ENCODE measurements at regions of chr14 and their contacts with region 1.

Region 1: GRCh38 chr14:61837336-61838229 is 75.4 kb downstream of the SNAPC1 start:
- DNase-seq: peak; percentile 46
- ATAC-seq: peak; percentile 99
- H3K4me3 ChIP-seq: no peak overlapping the region
- H3K27ac ChIP-seq: no peak overlapping the region
- H3K4me1 ChIP-seq: no peaks in the 10 kb centered on the region; the same call in 1 of the 2 replicates
- H3K27me3 ChIP-seq: no peaks in the 10 kb centered on the region
- CTCF ChIP-seq: peak; percentile 93 to 96 (median 96)
- EP300 ChIP-seq: no peak
- POLR2A ChIP-seq: no peak
- RAD21 ChIP-seq: peak; percentile 100

Region 2: DNA sequence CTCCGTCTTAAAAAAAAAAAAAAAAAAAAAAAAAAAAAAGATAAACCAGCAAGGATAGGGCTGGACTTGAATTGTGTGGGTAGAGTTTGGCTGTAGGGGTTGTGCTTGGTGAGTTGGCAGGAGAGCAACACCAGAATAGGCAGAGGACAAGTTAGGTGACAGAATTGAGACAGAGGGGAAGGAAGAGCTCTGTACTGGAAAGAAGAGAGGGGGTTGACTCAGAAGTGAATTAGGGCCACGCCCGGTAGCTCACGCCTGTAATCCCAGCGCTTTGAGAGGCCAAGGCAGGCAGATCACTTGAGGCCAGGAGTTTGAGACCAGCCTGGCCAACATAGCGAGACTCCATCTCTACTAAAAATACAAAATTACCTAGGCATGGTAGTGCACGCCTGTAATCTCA is 550.4 kb before region 1 on chr14:
- CTCF ChIA-PET with region 1: interaction called, 21 read pairs
- POLR2A ChIA-PET with region 1: interaction called, 5 read pairs
- RAD21 ChIA-PET with region 1: interaction called, 5 read pairs
- SMC1A ChIA-PET with region 1: interaction called, 9 read pairs
- in situ Hi-C with region 1: no loop called
- intact Hi-C with region 1: no loop called
- DNase-seq: no peak
- ATAC-seq: no peak
- H3K4me3 ChIP-seq: no peak overlapping the region
- H3K27ac ChIP-seq: no peak overlapping the region
- H3K4me1 ChIP-seq: no peaks in the 10 kb centered on the region
- H3K27me3 ChIP-seq: no peaks in the 10 kb centered on the region; a peak in 1 of 4 replicates
- CTCF ChIP-seq: no peak
- EP300 ChIP-seq: no peak
- POLR2A ChIP-seq: no peak
- RAD21 ChIP-seq: no peak

Region 3: DNA sequence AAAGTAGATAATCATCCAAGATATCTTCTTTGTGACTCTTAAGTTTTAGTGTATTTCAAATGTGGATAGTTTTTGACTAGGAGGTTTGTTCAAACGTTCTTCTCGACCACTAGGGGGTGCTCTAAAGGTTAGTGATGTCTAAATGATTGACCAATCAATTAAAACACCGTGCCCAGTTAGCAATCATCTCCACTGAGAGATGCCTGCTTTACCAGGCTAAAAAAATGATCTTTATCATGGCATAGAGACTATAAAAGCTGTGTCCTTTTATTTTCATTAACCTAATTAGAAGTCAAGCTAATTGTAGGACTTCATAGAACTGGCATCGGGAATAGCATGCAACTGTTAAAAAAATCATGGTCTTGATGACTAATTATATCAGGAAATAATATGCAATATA is 362.3 kb before region 1 on chr14:
- CTCF ChIA-PET with region 1: interaction called, 72 read pairs
- POLR2A ChIA-PET with region 1: no interaction called
- RAD21 ChIA-PET with region 1: interaction called, 57 read pairs
- SMC1A ChIA-PET with region 1: interaction called, 56 read pairs
- in situ Hi-C with region 1: no loop called
- intact Hi-C with region 1: loop called (anchors 5 kb)
- DNase-seq: no peak
- ATAC-seq: peak; percentile 48
- H3K4me3 ChIP-seq: no peak overlapping the region
- H3K27ac ChIP-seq: no peak overlapping the region
- H3K4me1 ChIP-seq: peaks cover 67% of the 10 kb centered on the region
- H3K27me3 ChIP-seq: no peaks in the 10 kb centered on the region
- CTCF ChIP-seq: peak; percentile 54 to 59 (median 57); a peak in 5 of 6 replicates
- EP300 ChIP-seq: no peak
- POLR2A ChIP-seq: no peak
- RAD21 ChIP-seq: peak; percentile 55

Region 4: GRCh38 chr14:61553725-61554641 is 283.6 kb before region 1 on chr14:
- CTCF ChIA-PET with region 1: interaction called, 7 read pairs
- POLR2A ChIA-PET with region 1: no interaction called
- RAD21 ChIA-PET with region 1: interaction called, 10 read pairs
- SMC1A ChIA-PET with region 1: interaction called, 16 read pairs
- in situ Hi-C with region 1: no loop called
- intact Hi-C with region 1: no loop called
- DNase-seq: no peak
- ATAC-seq: no peak
- H3K4me3 ChIP-seq: no peak overlapping the region
- H3K27ac ChIP-seq: no peak overlapping the region
- H3K4me1 ChIP-seq: peaks cover 15% of the 10 kb centered on the region
- H3K27me3 ChIP-seq: no peaks in the 10 kb centered on the region
- CTCF ChIP-seq: no peak
- EP300 ChIP-seq: no peak
- POLR2A ChIP-seq: no peak
- RAD21 ChIP-seq: no peak

Region 5: GRCh38 chr14:61744239-61744638 is 93.3 kb before region 1 on chr14:
- CTCF ChIA-PET with region 1: interaction called, 40 read pairs
- POLR2A ChIA-PET with region 1: interaction called, 8 read pairs
- RAD21 ChIA-PET with region 1: interaction called, 18 read pairs
- SMC1A ChIA-PET with region 1: interaction called, 39 read pairs
- in situ Hi-C with region 1: no loop called
- intact Hi-C with region 1: no loop called
- DNase-seq: no peak
- ATAC-seq: no peak
- H3K4me3 ChIP-seq: no peak overlapping the region
- H3K27ac ChIP-seq: no peak overlapping the region
- H3K4me1 ChIP-seq: peaks cover 5% of the 10 kb centered on the region
- H3K27me3 ChIP-seq: no peaks in the 10 kb centered on the region
- CTCF ChIP-seq: no peak
- EP300 ChIP-seq: no peak
- POLR2A ChIP-seq: no peak
- RAD21 ChIP-seq: no peak

Region 6: DNA sequence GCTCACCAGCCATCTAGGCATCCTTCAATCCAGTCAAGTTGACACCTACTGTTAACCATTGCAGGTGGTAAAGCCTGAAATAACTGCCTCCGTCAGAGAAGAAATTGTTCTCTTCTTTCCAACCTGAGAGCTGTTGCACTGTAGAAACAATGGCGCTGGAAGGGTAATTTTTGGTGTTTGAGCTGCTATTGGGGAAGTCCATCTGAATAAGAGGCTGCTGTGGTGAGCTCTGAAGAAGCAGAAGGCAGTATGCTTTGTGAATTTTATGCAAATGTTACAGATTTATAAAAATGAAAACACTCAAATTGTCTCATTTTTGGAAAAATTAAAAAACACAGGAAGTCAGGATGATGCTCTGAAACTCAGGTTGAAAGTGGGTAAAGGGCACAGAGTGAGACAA is 15.1 kb before region 1 on chr14:
- CTCF ChIA-PET with region 1: interaction called, 21 read pairs
- POLR2A ChIA-PET with region 1: interaction called, 3 read pairs
- RAD21 ChIA-PET with region 1: interaction called, 11 read pairs
- SMC1A ChIA-PET with region 1: interaction called, 8 read pairs
- in situ Hi-C with region 1: no loop called
- intact Hi-C with region 1: no loop called
- DNase-seq: no peak
- ATAC-seq: peak; percentile 45; the same call in 2 of the 3 replicates
- H3K4me3 ChIP-seq: no peak overlapping the region
- H3K27ac ChIP-seq: no peak overlapping the region
- H3K4me1 ChIP-seq: no peaks in the 10 kb centered on the region; the same call in 1 of the 2 replicates
- H3K27me3 ChIP-seq: no peaks in the 10 kb centered on the region
- CTCF ChIP-seq: no peak
- EP300 ChIP-seq: no peak
- POLR2A ChIP-seq: no peak
- RAD21 ChIP-seq: no peak